HCT116 (cell line): ENCODE measurements at regions of chr18 and their contacts with region 1.

Region 1: DNA sequence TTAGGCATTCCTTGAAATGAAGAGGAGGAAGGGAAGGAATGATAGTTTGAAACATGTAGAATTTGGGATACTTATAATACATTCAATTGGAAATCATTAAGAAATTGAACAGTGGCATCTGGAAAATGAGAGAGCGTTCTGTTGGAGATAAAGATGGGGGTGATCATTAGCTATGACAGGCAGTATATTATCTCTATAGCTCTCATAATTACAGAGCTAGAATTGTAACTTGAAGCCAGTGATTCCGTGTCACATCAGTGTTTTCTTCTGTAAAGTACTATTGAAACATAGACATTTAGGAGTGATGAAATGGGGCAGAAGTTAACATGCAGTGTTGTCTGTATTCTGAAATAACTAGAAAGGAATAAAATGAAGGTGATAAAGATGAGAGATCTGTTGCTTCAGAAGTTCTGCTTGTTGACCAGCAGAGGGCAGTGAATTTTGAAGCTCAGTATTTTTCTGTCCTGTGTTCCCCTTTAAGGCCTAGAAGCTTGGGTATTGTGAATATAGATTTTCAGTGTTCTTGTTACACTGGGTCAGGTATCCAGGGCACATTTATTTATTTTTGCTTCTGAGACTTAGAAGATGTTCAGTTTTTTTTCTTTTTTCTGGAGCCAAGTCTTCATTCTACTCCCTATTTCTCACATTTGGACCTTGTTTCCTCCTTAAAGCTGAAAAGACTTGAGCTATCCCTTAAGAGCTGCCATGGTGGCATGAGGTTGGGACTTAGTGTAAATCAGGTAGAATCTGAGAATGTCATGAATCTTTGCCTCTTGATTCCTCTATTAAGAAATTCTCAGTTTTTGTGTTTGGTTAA is 157.4 kb downstream of the TAF4B start:
- DNase-seq: peak; percentile 52
- ATAC-seq: peak; percentile 84
- H3K4me3 ChIP-seq: no peak overlapping the region
- H3K27ac ChIP-seq: no peak overlapping the region
- H3K4me1 ChIP-seq: peaks cover 14 to 15% of the 10 kb centered on the region in 2 experiments
- H3K27me3 ChIP-seq: no peaks in the 10 kb centered on the region
- CTCF ChIP-seq: peak; percentile 28 to 78 (median 61); a peak in 5 of 6 replicates
- POLR2A ChIP-seq: no peak
- RAD21 ChIP-seq: peak; percentile 59

Region 2: GRCh38 chr18:26268454-26268853 is 115.2 kb before region 1 on chr18:
- CTCF ChIA-PET with region 1: no interaction called
- POLR2A ChIA-PET with region 1: no interaction called
- RAD21 ChIA-PET with region 1: no interaction called
- intact Hi-C with region 1: no loop called
- DNase-seq: no peak
- ATAC-seq: no peak
- H3K4me3 ChIP-seq: no peak overlapping the region
- H3K27ac ChIP-seq: no peak overlapping the region
- H3K4me1 ChIP-seq: peaks cover 0 to 5% of the 10 kb centered on the region in 2 experiments; a peak in 1 of 4 replicates
- H3K27me3 ChIP-seq: no peaks in the 10 kb centered on the region
- CTCF ChIP-seq: no peak
- POLR2A ChIP-seq: no peak
- RAD21 ChIP-seq: no peak

Region 3: GRCh38 chr18:26307189-26307773 is 76.4 kb before region 1 on chr18:
- CTCF ChIA-PET with region 1: interaction called, 6 read pairs
- POLR2A ChIA-PET with region 1: no interaction called
- RAD21 ChIA-PET with region 1: no interaction called
- intact Hi-C with region 1: loop called (anchors 2 kb)
- DNase-seq: peak; percentile 15
- ATAC-seq: peak; percentile 71
- H3K4me3 ChIP-seq: no peak overlapping the region
- H3K27ac ChIP-seq: no peak overlapping the region
- H3K4me1 ChIP-seq: no peaks in the 10 kb centered on the region
- H3K27me3 ChIP-seq: no peaks in the 10 kb centered on the region
- CTCF ChIP-seq: peak; percentile 48 to 67 (median 62); a peak in 5 of 6 replicates
- POLR2A ChIP-seq: no peak
- RAD21 ChIP-seq: peak; percentile 71

Region 4: DNA sequence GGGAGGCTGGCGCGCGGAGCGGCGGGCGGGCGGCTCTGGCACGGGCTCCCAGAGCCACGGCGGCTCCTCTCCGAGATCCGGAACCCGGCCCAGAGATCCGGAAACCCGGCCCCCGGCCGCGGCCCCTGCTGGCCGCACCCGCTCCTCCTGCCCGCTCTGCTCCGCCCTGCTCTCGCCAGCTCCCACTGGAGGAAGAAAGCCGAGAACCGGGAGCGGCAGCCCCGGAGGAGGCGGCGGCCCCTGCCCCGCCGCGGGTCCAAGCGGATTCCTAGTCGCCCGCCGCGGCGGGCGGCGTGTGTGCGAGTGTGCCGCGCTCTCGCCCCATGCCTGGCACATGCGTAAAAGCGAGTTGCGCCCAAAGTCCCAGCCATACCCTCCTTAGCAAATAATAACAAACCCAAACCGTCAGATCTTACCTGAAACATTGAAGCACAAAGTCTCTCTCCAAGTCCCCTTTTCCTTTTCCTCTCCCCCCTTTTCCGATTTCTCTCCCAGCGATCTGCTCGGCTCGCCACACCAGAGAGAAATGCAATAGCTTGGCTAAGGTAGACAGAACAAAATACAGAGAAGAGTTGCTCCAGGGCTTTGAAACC is 273.4 kb after region 1 on chr18:
- CTCF ChIA-PET with region 1: interaction called, 3 read pairs
- POLR2A ChIA-PET with region 1: no interaction called
- RAD21 ChIA-PET with region 1: no interaction called
- intact Hi-C with region 1: loop called (anchors 10 kb)
- DNase-seq: no peak
- ATAC-seq: peak; percentile 72
- H3K4me3 ChIP-seq: peak overlapping the region; percentile 58 to 65
- H3K27ac ChIP-seq: no peak overlapping the region; the same call in 1 of the 2 replicates
- H3K4me1 ChIP-seq: peaks cover 8 to 13% of the 10 kb centered on the region in 2 experiments
- H3K27me3 ChIP-seq: peaks cover 78% of the 10 kb centered on the region
- CTCF ChIP-seq: peak in 1 of 3 experiments; percentile 28; a peak in 1 of 6 replicates
- POLR2A ChIP-seq: no peak
- RAD21 ChIP-seq: no peak

Region 5: DNA sequence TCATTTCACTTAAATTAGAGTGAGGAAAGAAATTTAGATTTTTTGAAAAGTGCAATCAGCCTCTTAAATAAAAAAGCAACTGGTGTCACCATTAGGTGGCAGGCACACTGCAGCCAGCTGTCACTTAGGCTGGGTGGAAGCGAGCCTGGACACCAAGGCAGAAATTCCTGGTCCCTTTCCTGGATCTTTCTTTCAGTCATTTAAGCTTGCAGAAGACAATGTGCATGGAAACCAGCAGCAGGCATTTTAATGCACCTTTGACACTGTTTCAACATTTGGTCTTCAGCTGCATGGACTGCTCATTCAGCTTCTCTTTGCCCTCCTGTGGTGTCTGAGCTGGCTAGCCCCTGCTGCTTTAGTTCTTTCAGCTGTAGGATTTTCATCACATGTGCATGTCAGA is 420.9 kb after region 1 on chr18:
- CTCF ChIA-PET with region 1: no interaction called
- POLR2A ChIA-PET with region 1: no interaction called
- RAD21 ChIA-PET with region 1: interaction called in 1 of 2 experiments, 3 read pairs
- intact Hi-C with region 1: loop called (anchors 10 kb)
- DNase-seq: no peak
- ATAC-seq: peak; percentile 58; the same call in 1 of the 2 replicates
- H3K4me3 ChIP-seq: no peak overlapping the region
- H3K27ac ChIP-seq: no peak overlapping the region
- H3K4me1 ChIP-seq: no peaks in the 10 kb centered on the region
- H3K27me3 ChIP-seq: no peaks in the 10 kb centered on the region
- CTCF ChIP-seq: peak; percentile 18 to 52 (median 38); a peak in 4 of 6 replicates
- POLR2A ChIP-seq: no peak
- RAD21 ChIP-seq: peak; percentile 42; the same call in 1 of the 2 replicates

Region 6: GRCh38 chr18:27005589-27005988 is 621.9 kb after region 1 on chr18:
- CTCF ChIA-PET with region 1: interaction called, 4 read pairs
- POLR2A ChIA-PET with region 1: no interaction called
- RAD21 ChIA-PET with region 1: no interaction called
- intact Hi-C with region 1: loop called (anchors 10 kb)
- DNase-seq: peak; percentile 10
- ATAC-seq: peak; percentile 82
- H3K4me3 ChIP-seq: no peak overlapping the region
- H3K27ac ChIP-seq: no peak overlapping the region
- H3K4me1 ChIP-seq: no peaks in the 10 kb centered on the region
- H3K27me3 ChIP-seq: peaks cover 7% of the 10 kb centered on the region; the same call in 1 of the 2 replicates
- CTCF ChIP-seq: peak in 2 of 3 experiments; percentile 55 to 57; a peak in 4 of 6 replicates
- POLR2A ChIP-seq: no peak
- RAD21 ChIP-seq: peak; percentile 33